Breast epithelium (tissue), 4 donors: ENCODE measurements at regions of chr4 and their contacts with region 1.

Region 1: DNA sequence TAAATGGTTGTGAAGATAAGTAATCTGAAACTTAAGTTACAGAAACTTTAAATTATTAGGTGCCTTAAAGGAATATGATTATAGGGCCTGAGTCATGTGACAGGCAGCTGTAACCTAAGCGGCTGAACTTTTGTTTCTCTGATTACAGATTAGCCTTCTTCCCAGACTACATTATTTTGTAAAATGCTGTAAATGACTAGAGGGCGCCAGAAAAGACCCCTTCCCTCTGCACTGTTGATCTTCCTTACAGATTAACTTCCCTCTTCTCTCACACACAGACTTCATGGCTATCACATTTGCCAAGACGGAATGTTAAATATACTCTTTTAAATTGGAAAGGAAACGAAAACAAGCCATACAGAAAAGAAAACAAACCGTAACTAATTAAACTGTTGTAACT is 96.6 kb downstream of the EVC2 start:
- DNase-seq: no peak
- H3K4me3 ChIP-seq: no peak overlapping the region
- H3K27ac ChIP-seq: no peak overlapping the region
- H3K4me1 ChIP-seq: no peaks in the 10 kb centered on the region
- H3K27me3 ChIP-seq: no peaks in the 10 kb centered on the region
- CTCF ChIP-seq: no peak
- POLR2A ChIP-seq: no peak

Region 2: GRCh38 chr4:4985844-4986243 is 625.9 kb before region 1 on chr4:
- intact Hi-C with region 1: loop called (anchors 5 kb)
- DNase-seq: no peak
- H3K4me3 ChIP-seq: no peak overlapping the region
- H3K27ac ChIP-seq: no peak overlapping the region
- H3K4me1 ChIP-seq: no peaks in the 10 kb centered on the region
- H3K27me3 ChIP-seq: no peaks in the 10 kb centered on the region
- CTCF ChIP-seq: no peak
- POLR2A ChIP-seq: no peak